ENCODE measurements at regions of chr7 and their contacts with region 1.

Region 1: DNA sequence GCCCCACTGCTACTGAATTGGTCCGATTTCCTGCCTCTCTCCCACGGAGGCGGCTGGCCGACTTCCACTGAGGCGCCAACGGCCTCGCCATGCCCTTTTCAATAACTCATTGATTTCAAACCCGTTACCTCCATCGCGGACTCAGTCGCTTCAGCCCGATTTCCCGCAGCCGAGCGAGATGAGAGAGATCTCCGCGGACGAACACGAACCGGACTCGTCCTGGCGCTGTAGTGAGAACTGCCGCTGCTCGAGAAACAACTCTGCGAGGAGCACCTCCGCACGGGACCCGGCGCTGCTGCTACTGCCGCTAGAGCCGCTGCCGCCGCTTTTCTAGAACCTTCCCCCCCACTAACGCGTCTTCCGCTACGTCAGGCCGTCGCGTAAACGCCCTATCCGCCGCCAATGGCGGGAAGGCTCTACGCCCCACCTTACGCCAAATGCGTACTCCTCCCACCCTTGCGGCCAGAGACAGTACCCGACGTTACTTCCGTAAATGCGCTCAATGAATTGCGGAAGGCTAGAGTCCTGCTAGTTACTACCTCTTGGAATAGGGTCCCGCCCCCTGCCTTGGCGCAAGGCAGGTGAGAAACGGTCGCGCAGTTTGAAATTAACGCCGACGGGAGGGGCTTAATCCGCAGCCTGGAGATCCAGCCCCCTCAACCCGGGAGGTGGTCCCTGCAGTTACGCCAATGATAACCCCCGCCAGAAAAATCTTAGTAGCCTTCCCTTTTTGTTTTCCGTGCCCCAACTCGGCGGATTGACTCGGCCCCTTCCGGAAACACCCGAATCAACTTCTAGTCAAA is at the start of gene HNRNPA2B1:
- DNase-seq: peak; percentile 99
- H3K4me3 ChIP-seq: peak within 1 kb of the TSS; percentile 98
- H3K27ac ChIP-seq: peak within 1 kb of the TSS; percentile 92
- H3K4me1 ChIP-seq: peaks cover 45% of the 10 kb centered on the region
- H3K27me3 ChIP-seq: no peaks in the 10 kb centered on the region
- CTCF ChIP-seq: no peak
- total RNA-seq, gene HNRNPA2B1: 526 and 792 TPM in 2 replicates

Region 2: GRCh38 chr7:25894902-25895791 is 305.5 kb before region 1 on chr7:
- CTCF ChIA-PET with region 1: interaction called, 12 read pairs
- POLR2A ChIA-PET with region 1: no interaction called
- intact Hi-C with region 1: loop called (anchors 10 kb)
- DNase-seq: peak in 1 of 2 experiments; percentile 24
- H3K4me3 ChIP-seq: peak overlapping the region; percentile 40; the same call in 1 of the 2 replicates
- H3K27ac ChIP-seq: no peak overlapping the region
- H3K4me1 ChIP-seq: no peaks in the 10 kb centered on the region
- H3K27me3 ChIP-seq: no peaks in the 10 kb centered on the region
- CTCF ChIP-seq: peak; percentile 71

Region 3: GRCh38 chr7:26078437-26079336 is 122.0 kb before region 1 on chr7:
- CTCF ChIA-PET with region 1: interaction called, 5 read pairs
- POLR2A ChIA-PET with region 1: interaction called, 14 read pairs
- intact Hi-C with region 1: no loop called
- DNase-seq: peak in 1 of 2 experiments; percentile 51
- H3K4me3 ChIP-seq: no peak overlapping the region
- H3K27ac ChIP-seq: no peak overlapping the region
- H3K4me1 ChIP-seq: peaks cover 37% of the 10 kb centered on the region
- H3K27me3 ChIP-seq: no peaks in the 10 kb centered on the region
- CTCF ChIP-seq: no peak

Region 4: DNA sequence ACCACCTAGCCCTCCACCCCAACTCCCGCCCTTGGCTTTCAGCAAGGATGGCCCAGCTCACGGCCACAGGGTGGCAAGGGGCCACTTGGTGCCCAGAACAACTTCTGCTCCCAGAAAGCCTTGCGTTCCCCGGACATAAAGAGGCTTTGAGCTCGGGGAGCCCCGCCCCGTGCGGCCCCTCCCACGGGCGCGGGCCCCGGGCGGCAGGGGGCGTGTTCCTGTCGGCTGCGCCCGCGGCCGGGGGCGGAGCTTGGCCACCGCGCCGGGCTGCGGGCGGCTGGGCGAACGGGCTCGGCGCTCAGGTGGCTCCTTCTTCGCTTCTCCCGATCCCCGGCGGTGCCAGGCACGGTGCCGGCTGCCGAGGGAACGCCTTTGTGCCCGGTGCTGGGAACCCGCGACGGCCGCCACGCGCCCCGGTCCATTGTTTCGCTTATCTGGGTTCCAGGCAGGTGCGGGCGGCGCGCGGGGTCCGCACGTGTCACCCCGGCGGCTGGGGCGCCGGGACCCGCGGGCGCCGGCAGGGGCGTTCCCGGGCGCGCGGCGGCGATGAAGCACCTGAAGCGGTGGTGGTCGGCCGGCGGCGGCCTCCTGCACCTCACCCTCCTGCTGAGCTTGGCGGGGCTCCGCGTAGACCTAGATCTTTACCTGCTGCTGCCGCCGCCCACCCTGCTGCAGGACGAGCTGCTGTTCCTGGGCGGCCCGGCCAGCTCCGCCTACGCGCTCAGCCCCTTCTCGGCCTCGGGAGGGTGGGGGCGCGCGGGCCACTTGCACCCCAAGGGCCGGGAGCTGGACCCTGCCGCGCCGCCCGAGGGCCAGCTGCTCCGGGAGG is 48.5 kb before region 1 on chr7 and contains the start of gene NFE2L3:
- CTCF ChIA-PET with region 1: interaction called, 5 read pairs
- POLR2A ChIA-PET with region 1: interaction called, 8 read pairs
- intact Hi-C with region 1: loop called (anchors 1 kb)
- DNase-seq: peak; percentile 69 to 92
- H3K4me3 ChIP-seq: peak within 1 kb of the TSS; percentile 77
- H3K27ac ChIP-seq: peak within 1 kb of the TSS; percentile 96
- H3K4me1 ChIP-seq: peaks cover 33% of the 10 kb centered on the region
- H3K27me3 ChIP-seq: no peaks in the 10 kb centered on the region
- CTCF ChIP-seq: no peak; the same call in 1 of the 2 replicates
- total RNA-seq, gene NFE2L3: 44.2 and 49.1 TPM in 2 replicates

Region 5: DNA sequence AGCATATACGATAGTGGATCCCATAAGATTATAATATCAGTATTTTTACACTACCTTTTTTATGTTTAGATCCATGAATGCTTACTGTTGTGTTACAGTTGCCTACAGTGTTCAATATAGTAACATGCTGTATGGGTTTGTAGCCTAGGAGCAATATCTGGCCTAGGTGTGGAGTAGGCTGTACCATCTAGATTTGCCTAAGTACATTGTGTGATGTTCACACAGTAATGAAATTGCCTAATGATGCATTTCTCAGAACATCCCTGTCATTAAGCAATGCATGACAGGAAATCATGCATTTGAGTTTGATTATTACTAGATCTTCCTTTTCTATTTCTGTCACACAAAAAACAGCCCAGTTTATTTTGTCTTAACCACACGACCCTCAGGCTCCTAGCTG is 15.4 kb after region 1 on chr7:
- CTCF ChIA-PET with region 1: no interaction called
- POLR2A ChIA-PET with region 1: interaction called, 33 read pairs
- intact Hi-C with region 1: no loop called
- DNase-seq: no peak
- H3K4me3 ChIP-seq: no peak overlapping the region
- H3K27ac ChIP-seq: no peak overlapping the region
- H3K4me1 ChIP-seq: no peaks in the 10 kb centered on the region
- H3K27me3 ChIP-seq: no peaks in the 10 kb centered on the region
- CTCF ChIP-seq: no peak